ENCODE measurements at regions of chr3 and their contacts with region 1.

Region 1: DNA sequence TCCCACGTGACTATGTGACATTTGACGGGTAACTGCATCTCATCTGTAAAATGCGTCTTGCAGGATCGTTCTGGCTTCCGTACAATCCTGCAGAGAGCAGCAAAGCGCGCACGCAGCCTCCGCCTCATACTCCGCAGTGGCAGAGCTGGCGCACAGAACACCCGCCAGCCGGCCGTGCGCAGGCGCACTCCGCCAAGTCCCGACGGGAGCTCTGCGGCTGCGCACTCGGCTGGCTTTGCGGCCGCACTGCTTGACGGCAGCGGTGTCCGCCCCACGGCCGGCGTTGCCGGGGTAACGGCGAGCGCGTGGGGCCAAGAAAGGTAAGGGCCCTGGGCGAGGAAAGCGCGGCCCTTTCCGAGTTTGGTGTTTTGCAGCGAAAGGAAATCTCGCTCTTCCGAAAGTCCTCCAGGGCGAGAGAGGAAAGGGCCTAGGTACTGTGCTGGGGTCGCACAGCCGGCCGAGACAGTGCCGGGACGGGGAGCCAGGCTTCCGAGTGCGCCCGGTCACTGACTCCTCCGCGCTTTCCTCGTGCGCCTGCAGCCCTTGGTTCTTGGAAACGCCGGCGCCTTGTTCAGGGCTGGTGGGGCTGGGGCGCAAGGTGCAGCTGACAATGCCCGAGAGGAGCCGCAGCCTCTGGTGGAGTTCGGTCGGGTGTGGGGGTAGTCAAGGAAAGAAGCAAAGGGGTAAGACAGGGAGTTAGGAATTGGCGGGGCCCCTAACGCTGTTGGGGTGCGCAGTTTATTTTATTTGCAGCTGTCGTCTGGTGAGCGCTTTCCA is at the start of gene TSEN2:
- DNase-seq: peak; percentile 89 to 97
- ATAC-seq: peak; percentile 94 to 97 (median 95)
- H3K4me3 ChIP-seq: peak within 1 kb of the TSS; percentile 45 to 88 (median 64)
- H3K27ac ChIP-seq: peak within 1 kb of the TSS in 9 of 10 donors; percentile 64 to 89 (median 82)
- H3K4me1 ChIP-seq: peaks cover 3 to 41% (median 25%) of the 10 kb centered on the region in 9 donors
- H3K27me3 ChIP-seq: no peaks in the 10 kb centered on the region
- CTCF ChIP-seq: peak in 6 of 9 donors; percentile 7 to 47 (median 32)
- total RNA-seq, gene TSEN2: 15.7 to 33.7 (median 19.8) TPM

Region 2: DNA sequence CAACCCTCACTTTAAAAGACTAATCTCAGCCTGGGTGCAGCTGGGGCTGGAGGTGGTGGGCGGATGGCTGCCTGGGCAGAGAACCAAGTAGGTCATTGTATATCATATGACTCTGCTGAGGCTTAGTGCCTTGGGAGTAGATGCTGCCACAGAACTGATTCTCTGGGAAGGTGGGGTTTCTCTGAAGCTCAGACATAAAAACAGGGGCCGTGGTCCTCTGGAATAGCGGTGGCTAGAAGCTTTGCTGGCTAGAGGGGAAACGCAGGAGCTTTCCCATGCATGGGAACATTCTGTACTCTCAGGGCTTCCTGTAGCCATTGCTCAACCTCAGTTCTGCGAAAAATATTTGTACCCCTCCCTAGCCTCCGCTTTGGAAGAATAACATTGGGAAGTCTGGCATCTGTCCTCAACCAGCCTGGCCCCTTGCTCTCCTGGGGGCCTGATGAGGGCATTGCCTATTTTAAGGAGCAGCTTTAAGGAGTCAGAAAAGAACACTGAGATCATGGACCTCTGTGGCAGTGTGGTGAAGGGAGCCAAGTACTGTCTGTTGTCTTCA is 340.4 kb before region 1 on chr3:
- intact Hi-C with region 1: loop called in 6 of 10 experiments (anchors 2 to 5 kb)
- DNase-seq: peak; percentile 52 to 54
- ATAC-seq: peak; percentile 79 to 95 (median 86)
- H3K4me3 ChIP-seq: peak overlapping the region in 1 of 10 donors; percentile 18
- H3K27ac ChIP-seq: peak overlapping the region; percentile 60 to 89 (median 80)
- H3K4me1 ChIP-seq: peaks cover 6 to 68% (median 56%) of the 10 kb centered on the region in 9 donors
- H3K27me3 ChIP-seq: no peaks in the 10 kb centered on the region
- CTCF ChIP-seq: no peak

Region 3: DNA sequence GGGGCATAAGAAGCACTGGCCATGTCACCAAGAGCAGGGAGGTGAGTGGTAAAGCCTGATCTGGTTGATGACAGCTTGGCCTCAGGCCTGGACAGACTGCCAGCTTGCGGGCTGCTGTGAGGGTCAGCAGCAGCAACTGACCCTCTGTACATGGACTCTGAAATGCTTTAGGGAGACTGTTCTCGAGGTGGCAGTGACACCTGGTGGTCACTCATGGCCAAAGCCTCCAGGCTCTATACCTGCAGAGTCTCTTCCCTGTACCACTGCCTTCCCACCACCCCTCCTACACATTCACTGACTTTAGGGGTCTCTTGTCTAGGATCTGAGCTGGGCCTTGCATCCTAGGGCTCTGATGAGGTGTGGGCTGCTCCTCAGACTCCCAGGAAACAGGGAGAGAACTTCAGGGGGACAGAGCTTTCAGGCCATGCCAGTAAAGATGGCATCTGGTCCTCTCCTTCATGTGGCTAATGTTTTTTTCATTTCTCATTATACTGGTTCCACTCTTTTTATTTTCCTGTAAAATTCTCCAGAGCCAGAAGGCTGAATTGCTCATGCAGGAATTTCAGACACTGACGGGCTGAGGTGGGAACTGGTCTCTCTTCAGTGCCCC is 308.4 kb before region 1 on chr3:
- intact Hi-C with region 1: loop called in 8 of 10 experiments (anchors 2 to 5 kb)
- DNase-seq: peak; percentile 55 to 70
- ATAC-seq: peak; percentile 67 to 86 (median 82)
- H3K4me3 ChIP-seq: no peak overlapping the region
- H3K27ac ChIP-seq: no peak overlapping the region
- H3K4me1 ChIP-seq: peaks cover 0 to 58% (median 45%) of the 10 kb centered on the region in 9 donors
- H3K27me3 ChIP-seq: no peaks in the 10 kb centered on the region
- CTCF ChIP-seq: peak; percentile 77 to 95 (median 92)

Region 4: GRCh38 chr3:12273045-12273695 is 211.2 kb before region 1 on chr3:
- intact Hi-C with region 1: loop called in 1 of 10 experiments (anchors 10 kb)
- DNase-seq: no peak
- ATAC-seq: no peak
- H3K4me3 ChIP-seq: no peak overlapping the region
- H3K27ac ChIP-seq: no peak overlapping the region
- H3K4me1 ChIP-seq: peaks cover 0 to 12% (median 0%) of the 10 kb centered on the region in 9 donors
- H3K27me3 ChIP-seq: no peaks in the 10 kb centered on the region
- CTCF ChIP-seq: no peak

Region 5: GRCh38 chr3:12430086-12430485 is 54.3 kb before region 1 on chr3:
- intact Hi-C with region 1: loop called in 1 of 10 experiments (anchors 5 kb)
- DNase-seq: no peak
- ATAC-seq: peak in 4 of 8 donors; percentile 27 to 73 (median 44)
- H3K4me3 ChIP-seq: no peak overlapping the region
- H3K27ac ChIP-seq: peak overlapping the region in 2 of 10 donors; percentile 1 to 21
- H3K4me1 ChIP-seq: peaks cover 0 to 24% (median 12%) of the 10 kb centered on the region in 9 donors
- H3K27me3 ChIP-seq: no peaks in the 10 kb centered on the region
- CTCF ChIP-seq: no peak

Measured in heart right ventricle (tissue), 16 donors.